ENCODE measurements at regions of chr11 and their contacts with region 1.

Region 1: GRCh38 chr11:60762851-60763691 is 6.4 kb downstream of the MS4A15 start:
- DNase-seq: peak; percentile 7
- ATAC-seq: peak; percentile 49
- H3K4me3 ChIP-seq: no peak overlapping the region
- H3K27ac ChIP-seq: no peak overlapping the region
- H3K4me1 ChIP-seq: peaks cover 8 to 10% of the 10 kb centered on the region in 2 experiments; a peak in 2 of 4 replicates
- H3K27me3 ChIP-seq: 0 out of 2 replicates have a peak, but pooled peaks cover 5% of the 10 kb centered on the region
- CTCF ChIP-seq: peak; percentile 34 to 59 (median 47); a peak in 5 of 6 replicates
- POLR2A ChIP-seq: no peak
- RAD21 ChIP-seq: peak; percentile 21; the same call in 1 of the 2 replicates

Region 2: GRCh38 chr11:60647087-60647486 is 116.0 kb before region 1 on chr11:
- CTCF ChIA-PET with region 1: no interaction called
- POLR2A ChIA-PET with region 1: no interaction called
- RAD21 ChIA-PET with region 1: no interaction called
- intact Hi-C with region 1: no loop called
- DNase-seq: no peak
- ATAC-seq: no peak
- H3K4me3 ChIP-seq: no peak overlapping the region
- H3K27ac ChIP-seq: no peak overlapping the region
- H3K4me1 ChIP-seq: no peaks in the 10 kb centered on the region
- H3K27me3 ChIP-seq: no peaks in the 10 kb centered on the region
- CTCF ChIP-seq: no peak
- POLR2A ChIP-seq: no peak
- RAD21 ChIP-seq: no peak

Region 3: GRCh38 chr11:60657888-60658287 is 105.2 kb before region 1 on chr11:
- CTCF ChIA-PET with region 1: interaction called, 26 read pairs
- POLR2A ChIA-PET with region 1: no interaction called
- RAD21 ChIA-PET with region 1: interaction called in 1 of 2 experiments, 3 read pairs
- intact Hi-C with region 1: no loop called
- DNase-seq: no peak
- ATAC-seq: peak; percentile 64
- H3K4me3 ChIP-seq: no peak overlapping the region
- H3K27ac ChIP-seq: no peak overlapping the region
- H3K4me1 ChIP-seq: no peaks in the 10 kb centered on the region
- H3K27me3 ChIP-seq: no peaks in the 10 kb centered on the region
- CTCF ChIP-seq: peak in 1 of 3 experiments; percentile 15; a peak in 1 of 6 replicates
- POLR2A ChIP-seq: no peak
- RAD21 ChIP-seq: peak; percentile 37

Region 4: GRCh38 chr11:60786811-60787567 is 23.9 kb after region 1 on chr11:
- CTCF ChIA-PET with region 1: no interaction called
- POLR2A ChIA-PET with region 1: no interaction called
- RAD21 ChIA-PET with region 1: no interaction called
- intact Hi-C with region 1: no loop called
- DNase-seq: no peak
- ATAC-seq: no peak
- H3K4me3 ChIP-seq: no peak overlapping the region
- H3K27ac ChIP-seq: no peak overlapping the region
- H3K4me1 ChIP-seq: no peaks in the 10 kb centered on the region
- H3K27me3 ChIP-seq: no peaks in the 10 kb centered on the region
- CTCF ChIP-seq: no peak
- POLR2A ChIP-seq: no peak
- RAD21 ChIP-seq: no peak